OCI-LY7 (cell line): ENCODE measurements at regions of chr3 and their contacts with region 1.

Region 1: GRCh38 chr3:49007068-49007770 is at the start of gene WDR6:
- DNase-seq: peak; percentile 99
- H3K4me3 ChIP-seq: peak within 1 kb of the TSS; percentile 78
- H3K27ac ChIP-seq: peak within 1 kb of the TSS; percentile 74
- H3K4me1 ChIP-seq: peaks cover 18% of the 10 kb centered on the region
- CTCF ChIP-seq: peak; percentile 73
- total RNA-seq, gene WDR6: 92.0 and 101 TPM in 2 replicates

Region 2: GRCh38 chr3:49021813-49022687 is 14.8 kb after region 1 on chr3 and contains the start of gene NDUFAF3:
- CTCF ChIA-PET with region 1: interaction called, 3 read pairs
- POLR2A ChIA-PET with region 1: interaction called, 42 read pairs
- intact Hi-C with region 1: no loop called
- DNase-seq: peak; percentile 99
- H3K4me3 ChIP-seq: peak within 1 kb of the TSS; percentile 80
- H3K27ac ChIP-seq: peak within 1 kb of the TSS; percentile 93
- H3K4me1 ChIP-seq: peaks cover 65% of the 10 kb centered on the region
- CTCF ChIP-seq: peak; percentile 84
- total RNA-seq, gene NDUFAF3: 255 and 309 TPM in 2 replicates